ENCODE measurements at regions of chr16 and their contacts with region 1.

Region 1: GRCh38 chr16:69123910-69124309 is 8.5 kb downstream of the CHTF8 start:
- DNase-seq: peak; percentile 48 to 71 (median 53)
- H3K4me3 ChIP-seq: no peak overlapping the region
- H3K27ac ChIP-seq: no peak overlapping the region
- H3K4me1 ChIP-seq: no peaks in the 10 kb centered on the region
- H3K27me3 ChIP-seq: no peaks in the 10 kb centered on the region
- CTCF ChIP-seq: peak; percentile 48 to 74 (median 70)
- EP300 ChIP-seq: no peak
- POLR2A ChIP-seq: no peak

Region 2: GRCh38 chr16:68528686-68529379 is 595.1 kb before region 1 on chr16:
- intact Hi-C with region 1: loop called in 3 of 4 experiments (anchors 5 to 10 kb)
- DNase-seq: peak; percentile 81 to 92 (median 88)
- H3K4me3 ChIP-seq: peak overlapping the region; percentile 29
- H3K27ac ChIP-seq: no peak overlapping the region
- H3K4me1 ChIP-seq: peaks cover 7% of the 10 kb centered on the region
- H3K27me3 ChIP-seq: no peaks in the 10 kb centered on the region
- CTCF ChIP-seq: peak; percentile 94
- EP300 ChIP-seq: no peak
- POLR2A ChIP-seq: no peak

Region 3: DNA sequence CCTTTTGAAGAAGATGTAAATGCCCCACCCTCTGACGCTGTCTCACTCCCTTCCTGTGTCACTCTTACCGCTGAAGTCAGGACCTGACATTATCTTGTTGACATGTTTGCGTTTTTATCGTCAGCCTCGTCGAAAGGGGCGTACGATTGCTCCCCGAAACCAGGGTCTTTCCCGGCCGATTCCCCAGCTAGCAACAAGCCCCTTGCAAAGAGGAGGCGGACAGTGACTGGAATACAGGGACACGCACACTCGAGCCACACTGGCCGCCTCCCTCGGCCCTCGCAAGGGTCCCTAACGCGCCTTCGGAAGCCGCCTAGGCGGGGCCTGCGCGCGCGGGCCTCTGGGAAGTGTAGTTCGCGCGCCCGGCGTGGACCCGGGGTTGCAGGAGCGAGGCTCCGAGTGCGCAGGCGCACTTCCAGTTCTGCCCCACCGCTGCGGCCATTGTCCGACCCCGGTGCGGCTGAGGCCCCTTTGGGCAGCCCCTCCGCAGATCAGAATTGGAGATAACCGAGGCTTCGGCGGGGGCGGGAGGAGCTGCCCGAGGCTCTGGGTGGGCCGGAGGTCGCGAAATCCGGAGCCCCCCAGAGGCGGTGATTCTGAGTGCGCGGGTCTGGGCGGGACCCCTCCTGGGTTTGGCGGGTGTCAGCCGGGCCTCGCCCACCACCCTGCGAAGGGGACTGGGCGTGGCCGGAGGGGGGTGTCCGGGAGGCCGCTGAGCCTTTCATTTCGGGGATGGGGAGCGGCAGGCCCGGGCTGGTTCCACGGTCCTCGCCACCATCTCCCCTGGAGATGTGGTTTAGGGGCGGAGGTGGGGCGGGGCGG is 584.8 kb before region 1 on chr16 and contains the start of gene ZFP90:
- intact Hi-C with region 1: loop called in 1 of 4 experiments (anchors 10 kb)
- DNase-seq: peak; percentile 84 to 92 (median 88)
- H3K4me3 ChIP-seq: peak within 1 kb of the TSS; percentile 69
- H3K27ac ChIP-seq: peak within 1 kb of the TSS; percentile 38 to 54
- H3K4me1 ChIP-seq: peaks cover 4% of the 10 kb centered on the region
- H3K27me3 ChIP-seq: no peaks in the 10 kb centered on the region
- CTCF ChIP-seq: no peak
- EP300 ChIP-seq: no peak
- POLR2A ChIP-seq: no peak
- total RNA-seq, gene ZFP90: 29.8 to 50.0 (median 40.7) TPM

Region 4: DNA sequence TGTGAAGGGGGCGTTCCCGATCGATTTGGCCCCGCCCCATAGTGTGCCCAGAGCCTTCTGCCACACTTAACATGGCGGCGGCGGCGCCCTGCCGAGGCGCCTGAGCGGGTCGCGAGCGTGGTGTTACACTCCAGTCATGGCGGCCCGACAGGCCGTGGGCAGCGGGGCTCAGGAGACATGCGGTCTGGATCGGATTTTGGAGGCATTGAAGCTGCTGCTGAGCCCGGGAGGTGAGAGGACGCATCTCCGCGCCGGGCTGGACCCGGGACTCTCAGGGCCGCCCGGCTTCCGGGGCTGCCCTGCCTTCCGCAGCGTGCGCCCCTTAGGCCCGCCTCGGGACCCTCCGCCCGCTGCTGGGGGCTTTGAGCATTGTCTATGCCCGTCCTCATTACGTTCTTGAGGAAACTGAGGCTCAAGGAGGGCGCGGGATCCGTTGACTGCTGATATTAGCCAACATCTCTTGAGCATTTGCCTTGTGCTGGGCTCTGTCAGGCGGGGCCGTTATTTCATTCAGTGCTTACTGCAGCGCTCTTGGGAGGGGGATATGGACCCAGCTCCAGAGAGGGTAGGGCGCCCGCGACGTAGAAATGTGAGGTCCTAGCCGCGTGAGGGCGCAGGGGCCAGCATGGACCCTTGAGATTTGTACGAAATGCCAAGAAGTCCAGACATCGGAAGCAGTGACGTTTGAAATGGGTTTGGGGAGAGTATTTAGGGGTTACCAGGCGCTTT is 280.3 kb before region 1 on chr16 and contains the start of gene TANGO6:
- intact Hi-C with region 1: loop called in 3 of 4 experiments (anchors 5 to 10 kb)
- DNase-seq: peak; percentile 81 to 92 (median 87)
- H3K4me3 ChIP-seq: peak within 1 kb of the TSS; percentile 77
- H3K27ac ChIP-seq: peak within 1 kb of the TSS; percentile 80 to 86
- H3K4me1 ChIP-seq: no peaks in the 10 kb centered on the region
- H3K27me3 ChIP-seq: no peaks in the 10 kb centered on the region
- CTCF ChIP-seq: no peak
- EP300 ChIP-seq: no peak
- POLR2A ChIP-seq: peak; percentile 15
- total RNA-seq, gene TANGO6: 9.4 to 27.8 (median 18.3) TPM

Region 5: GRCh38 chr16:68848786-68849185 is 275.1 kb before region 1 on chr16:
- intact Hi-C with region 1: loop called in 3 of 4 experiments (anchors 5 to 10 kb)
- DNase-seq: no peak
- H3K4me3 ChIP-seq: no peak overlapping the region
- H3K27ac ChIP-seq: no peak overlapping the region
- H3K4me1 ChIP-seq: peaks cover 1% of the 10 kb centered on the region
- H3K27me3 ChIP-seq: no peaks in the 10 kb centered on the region
- CTCF ChIP-seq: no peak
- EP300 ChIP-seq: no peak
- POLR2A ChIP-seq: no peak

Region 6: DNA sequence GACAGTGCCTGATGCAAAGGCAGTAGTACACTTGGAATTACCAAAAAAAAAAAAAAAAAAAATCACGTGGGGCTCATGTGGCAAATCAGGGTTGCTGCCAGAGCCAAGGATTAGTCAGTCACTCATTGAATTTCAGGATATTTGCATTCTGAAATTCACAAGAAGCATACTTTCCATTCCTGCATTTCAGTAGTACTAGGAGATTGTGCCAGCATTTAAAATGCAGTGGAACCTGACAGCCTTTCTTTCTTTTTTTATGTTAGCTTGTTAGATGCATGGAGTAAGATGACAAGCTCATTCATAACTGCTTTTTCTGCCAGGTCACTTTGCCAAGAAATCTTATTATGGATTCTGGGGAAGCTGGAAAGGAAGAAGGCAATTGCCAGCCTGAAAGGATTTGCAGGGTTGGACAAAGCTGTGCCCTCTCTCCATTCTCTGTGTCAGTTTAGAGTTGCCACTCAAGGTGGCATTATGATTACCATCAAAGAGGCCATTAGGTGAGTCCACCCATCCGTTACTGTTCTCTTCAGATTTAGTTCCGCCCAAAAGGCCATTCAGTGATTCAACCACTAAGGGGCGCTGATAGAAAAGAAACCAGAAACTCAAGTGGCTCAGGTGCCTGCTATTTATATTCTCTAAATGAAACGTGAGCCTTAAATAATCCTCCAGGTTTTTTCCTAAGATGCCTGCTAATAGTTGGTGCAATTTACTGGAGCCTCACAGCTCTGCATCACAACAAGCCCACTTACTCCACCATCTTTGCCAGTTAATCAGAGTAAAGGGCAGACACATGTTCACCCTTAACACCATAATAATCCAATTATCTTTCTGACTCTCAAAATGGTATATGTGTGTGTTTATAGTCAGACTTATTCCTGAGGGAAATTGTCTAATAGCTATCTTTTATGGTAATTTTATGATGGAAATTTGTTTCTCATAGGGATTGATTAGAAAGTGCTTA is 221.6 kb before region 1 on chr16:
- intact Hi-C with region 1: loop called in 1 of 4 experiments (anchors 10 kb)
- DNase-seq: no peak
- H3K4me3 ChIP-seq: no peak overlapping the region
- H3K27ac ChIP-seq: no peak overlapping the region
- H3K4me1 ChIP-seq: no peaks in the 10 kb centered on the region
- H3K27me3 ChIP-seq: no peaks in the 10 kb centered on the region
- CTCF ChIP-seq: peak in 1 of 3 donors; percentile 21
- EP300 ChIP-seq: no peak
- POLR2A ChIP-seq: no peak

Region 7: GRCh38 chr16:69595127-69596036 is 471.5 kb after region 1 on chr16:
- intact Hi-C with region 1: no loop called
- DNase-seq: no peak
- H3K4me3 ChIP-seq: no peak overlapping the region
- H3K27ac ChIP-seq: no peak overlapping the region
- H3K4me1 ChIP-seq: peaks cover 3% of the 10 kb centered on the region
- H3K27me3 ChIP-seq: no peaks in the 10 kb centered on the region
- CTCF ChIP-seq: no peak
- EP300 ChIP-seq: no peak
- POLR2A ChIP-seq: no peak

Measured in ovary (tissue), 10 donors.